GM12878 (cell line): ENCODE measurements at regions of chr13 and their contacts with region 1.

Region 1: GRCh38 chr13:80342471-80343380 is 1.8 kb upstream of the SPRY2 start:
- DNase-seq: no peak
- ATAC-seq: peak; percentile 51
- H3K4me3 ChIP-seq: peak overlapping the region; percentile 43; the same call in 1 of the 2 replicates
- H3K27ac ChIP-seq: no peak overlapping the region
- H3K4me1 ChIP-seq: no peaks in the 10 kb centered on the region
- H3K27me3 ChIP-seq: no peaks in the 10 kb centered on the region; a peak in 1 of 4 replicates
- CTCF ChIP-seq: peak; percentile 91 to 95 (median 94)
- EP300 ChIP-seq: no peak
- POLR2A ChIP-seq: no peak
- RAD21 ChIP-seq: peak; percentile 83

Region 2: DNA sequence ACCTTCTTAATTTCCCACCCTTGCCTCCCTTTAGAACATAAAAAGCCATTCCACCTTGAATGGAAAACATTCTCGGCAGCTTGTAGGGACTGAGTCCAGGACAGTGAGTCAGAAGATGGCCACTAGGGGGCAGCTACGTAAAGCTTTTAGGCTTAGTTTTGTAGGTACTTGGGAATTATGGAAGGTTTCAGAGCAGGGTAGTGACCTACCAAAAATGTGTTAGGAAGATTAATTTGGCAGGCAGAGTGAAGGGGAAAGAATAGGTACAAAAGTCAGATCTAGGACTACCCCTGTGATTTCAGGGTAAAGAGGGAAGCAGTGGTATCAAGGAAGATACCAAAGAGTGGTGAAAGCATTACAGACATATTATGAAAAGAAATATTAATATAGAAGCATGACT is 663.4 kb before region 1 on chr13:
- CTCF ChIA-PET with region 1: interaction called, 27 read pairs
- POLR2A ChIA-PET with region 1: no interaction called
- RAD21 ChIA-PET with region 1: interaction called, 30 read pairs
- SMC1A ChIA-PET with region 1: interaction called, 27 read pairs
- in situ Hi-C with region 1: no loop called
- intact Hi-C with region 1: loop called (anchors 5 kb)
- DNase-seq: no peak
- ATAC-seq: peak; percentile 87
- H3K4me3 ChIP-seq: no peak overlapping the region
- H3K27ac ChIP-seq: no peak overlapping the region
- H3K4me1 ChIP-seq: no peaks in the 10 kb centered on the region
- H3K27me3 ChIP-seq: no peaks in the 10 kb centered on the region
- CTCF ChIP-seq: peak; percentile 70 to 90 (median 83)
- EP300 ChIP-seq: no peak
- POLR2A ChIP-seq: no peak
- RAD21 ChIP-seq: peak; percentile 88

Region 3: DNA sequence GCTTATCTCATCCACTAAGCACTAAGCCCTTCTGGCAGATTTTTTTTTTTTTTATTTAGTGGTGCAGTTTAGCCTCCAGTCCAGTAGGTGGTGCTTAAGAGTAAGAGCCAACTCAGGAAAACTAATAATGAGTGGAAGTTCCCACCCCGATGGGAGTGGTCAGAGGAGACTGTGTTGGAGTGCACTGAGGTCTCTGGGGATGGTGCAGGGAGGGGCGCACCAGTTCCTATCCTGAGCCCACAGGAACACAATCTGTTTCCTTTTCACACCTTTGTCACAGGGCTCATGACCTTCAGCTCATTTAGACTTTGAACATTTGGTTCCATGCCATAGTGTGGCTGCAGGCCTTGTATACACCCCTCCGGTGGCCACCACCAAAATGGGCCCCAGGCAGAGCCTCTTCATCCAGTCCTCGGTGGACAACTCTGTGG is 369.2 kb before region 1 on chr13:
- CTCF ChIA-PET with region 1: no interaction called
- POLR2A ChIA-PET with region 1: no interaction called
- RAD21 ChIA-PET with region 1: no interaction called
- SMC1A ChIA-PET with region 1: interaction called, 4 read pairs
- in situ Hi-C with region 1: no loop called
- intact Hi-C with region 1: loop called (anchors 2 kb)
- DNase-seq: no peak
- ATAC-seq: peak; percentile 74
- H3K4me3 ChIP-seq: no peak overlapping the region
- H3K27ac ChIP-seq: no peak overlapping the region
- H3K4me1 ChIP-seq: no peaks in the 10 kb centered on the region
- H3K27me3 ChIP-seq: no peaks in the 10 kb centered on the region
- CTCF ChIP-seq: peak; percentile 37 to 55 (median 51); a peak in 5 of 6 replicates
- EP300 ChIP-seq: no peak
- POLR2A ChIP-seq: no peak
- RAD21 ChIP-seq: peak; percentile 71

Region 4: GRCh38 chr13:80259159-80259558 is 83.6 kb before region 1 on chr13:
- CTCF ChIA-PET with region 1: no interaction called
- POLR2A ChIA-PET with region 1: no interaction called
- RAD21 ChIA-PET with region 1: interaction called, 3 read pairs
- SMC1A ChIA-PET with region 1: interaction called, 6 read pairs
- in situ Hi-C with region 1: no loop called
- intact Hi-C with region 1: loop called (anchors 2 kb)
- DNase-seq: no peak
- ATAC-seq: peak; percentile 55
- H3K4me3 ChIP-seq: no peak overlapping the region
- H3K27ac ChIP-seq: no peak overlapping the region
- H3K4me1 ChIP-seq: peaks cover 9% of the 10 kb centered on the region; the same call in 1 of the 2 replicates
- H3K27me3 ChIP-seq: no peaks in the 10 kb centered on the region
- CTCF ChIP-seq: no peak
- EP300 ChIP-seq: no peak
- POLR2A ChIP-seq: no peak
- RAD21 ChIP-seq: no peak

Region 5: DNA sequence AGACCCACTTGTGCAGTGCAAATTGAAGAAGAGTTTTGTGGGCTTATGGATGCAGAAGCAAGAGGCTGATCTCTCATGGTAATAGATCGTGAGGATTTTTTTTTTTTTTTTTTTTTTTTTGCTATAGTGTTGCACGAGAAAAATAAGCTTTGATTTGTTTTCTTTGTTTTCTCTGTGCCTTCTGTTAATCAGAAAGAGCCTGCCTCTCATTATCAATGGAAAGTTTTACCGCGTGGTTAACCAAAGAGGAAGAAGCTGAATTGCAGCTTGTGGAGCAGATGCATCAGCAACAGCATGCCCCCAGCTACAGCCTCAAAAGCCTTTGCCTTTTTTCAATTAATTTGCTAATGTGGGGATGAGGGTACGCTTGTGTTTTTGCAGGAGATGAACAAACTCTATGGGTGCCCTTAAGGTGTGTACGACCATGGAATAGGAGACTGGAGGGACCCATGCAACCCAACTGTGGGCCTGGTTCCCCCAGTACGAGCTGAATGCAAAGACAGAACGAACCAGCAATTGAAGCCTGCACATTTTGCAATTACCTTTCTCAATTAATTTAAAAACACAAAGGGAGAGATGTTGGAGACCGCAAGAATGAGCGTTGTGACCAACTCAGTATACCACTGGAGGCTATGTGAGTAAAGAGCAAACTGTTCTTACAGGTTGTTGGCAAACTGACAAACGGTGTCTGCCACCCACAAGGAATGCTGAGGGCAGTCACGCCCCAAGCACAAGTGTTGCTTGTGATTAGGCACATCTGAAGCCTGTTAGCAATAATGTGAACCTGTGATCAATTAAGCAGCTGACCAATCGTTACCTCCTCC is 56.8 kb after region 1 on chr13:
- CTCF ChIA-PET with region 1: interaction called, 38 read pairs
- POLR2A ChIA-PET with region 1: interaction called, 16 read pairs
- RAD21 ChIA-PET with region 1: interaction called, 111 read pairs
- SMC1A ChIA-PET with region 1: interaction called, 84 read pairs
- in situ Hi-C with region 1: no loop called
- intact Hi-C with region 1: loop called (anchors 2 kb)
- DNase-seq: peak; percentile 17
- ATAC-seq: peak; percentile 62
- H3K4me3 ChIP-seq: no peak overlapping the region
- H3K27ac ChIP-seq: no peak overlapping the region
- H3K4me1 ChIP-seq: no peaks in the 10 kb centered on the region
- H3K27me3 ChIP-seq: no peaks in the 10 kb centered on the region
- CTCF ChIP-seq: no peak
- EP300 ChIP-seq: peak; percentile 13 to 56; a peak in 3 of 4 replicates
- POLR2A ChIP-seq: no peak
- RAD21 ChIP-seq: no peak

Region 6: DNA sequence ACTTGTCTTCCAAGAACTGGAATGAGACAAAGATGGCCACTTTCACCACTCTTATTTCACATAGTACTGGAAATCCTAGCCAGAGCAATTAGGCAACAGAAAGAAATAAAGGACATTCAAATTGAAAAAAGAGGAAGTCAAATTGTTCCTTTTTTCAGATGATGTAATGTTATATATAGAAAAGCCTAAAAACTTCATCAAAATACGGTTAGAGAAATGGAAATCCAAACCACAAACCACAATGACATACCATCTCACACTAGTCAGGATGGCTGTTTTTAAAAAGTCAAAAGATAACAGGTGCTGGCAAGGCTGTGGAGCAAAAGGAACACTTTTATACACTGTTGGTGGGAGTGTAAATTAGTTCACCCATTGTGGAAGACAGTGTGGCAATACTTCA is 111.5 kb after region 1 on chr13:
- CTCF ChIA-PET with region 1: interaction called, 14 read pairs
- POLR2A ChIA-PET with region 1: interaction called, 7 read pairs
- RAD21 ChIA-PET with region 1: interaction called, 9 read pairs
- SMC1A ChIA-PET with region 1: interaction called, 10 read pairs
- in situ Hi-C with region 1: no loop called
- intact Hi-C with region 1: loop called (anchors 1 kb)
- DNase-seq: peak; percentile 34
- ATAC-seq: peak; percentile 85
- H3K4me3 ChIP-seq: no peak overlapping the region
- H3K27ac ChIP-seq: no peak overlapping the region
- H3K4me1 ChIP-seq: no peaks in the 10 kb centered on the region
- H3K27me3 ChIP-seq: no peaks in the 10 kb centered on the region
- CTCF ChIP-seq: no peak
- EP300 ChIP-seq: peak; percentile 88 to 92
- POLR2A ChIP-seq: no peak
- RAD21 ChIP-seq: no peak

Region 7: GRCh38 chr13:81017513-81018152 is 674.9 kb after region 1 on chr13:
- CTCF ChIA-PET with region 1: interaction called, 40 read pairs
- POLR2A ChIA-PET with region 1: no interaction called
- RAD21 ChIA-PET with region 1: interaction called, 42 read pairs
- SMC1A ChIA-PET with region 1: interaction called, 31 read pairs
- in situ Hi-C with region 1: no loop called
- intact Hi-C with region 1: loop called (anchors 5 kb)
- DNase-seq: no peak
- ATAC-seq: peak; percentile 88
- H3K4me3 ChIP-seq: no peak overlapping the region
- H3K27ac ChIP-seq: no peak overlapping the region
- H3K4me1 ChIP-seq: no peaks in the 10 kb centered on the region
- H3K27me3 ChIP-seq: no peaks in the 10 kb centered on the region
- CTCF ChIP-seq: peak; percentile 38 to 54 (median 39); a peak in 3 of 6 replicates
- EP300 ChIP-seq: no peak
- POLR2A ChIP-seq: no peak
- RAD21 ChIP-seq: peak; percentile 72